HCT116 (cell line): ENCODE measurements at regions of chr4 and their contacts with region 1.

Region 1: GRCh38 chr4:106809076-106809475 is 227.0 kb downstream of the DKK2 start:
- DNase-seq: peak; percentile 26
- ATAC-seq: peak; percentile 81
- H3K4me3 ChIP-seq: no peak overlapping the region
- H3K27ac ChIP-seq: no peak overlapping the region
- H3K4me1 ChIP-seq: no peaks in the 10 kb centered on the region
- H3K27me3 ChIP-seq: no peaks in the 10 kb centered on the region
- CTCF ChIP-seq: peak; percentile 18 to 41 (median 36); a peak in 3 of 6 replicates
- POLR2A ChIP-seq: no peak
- RAD21 ChIP-seq: peak; percentile 75

Region 2: DNA sequence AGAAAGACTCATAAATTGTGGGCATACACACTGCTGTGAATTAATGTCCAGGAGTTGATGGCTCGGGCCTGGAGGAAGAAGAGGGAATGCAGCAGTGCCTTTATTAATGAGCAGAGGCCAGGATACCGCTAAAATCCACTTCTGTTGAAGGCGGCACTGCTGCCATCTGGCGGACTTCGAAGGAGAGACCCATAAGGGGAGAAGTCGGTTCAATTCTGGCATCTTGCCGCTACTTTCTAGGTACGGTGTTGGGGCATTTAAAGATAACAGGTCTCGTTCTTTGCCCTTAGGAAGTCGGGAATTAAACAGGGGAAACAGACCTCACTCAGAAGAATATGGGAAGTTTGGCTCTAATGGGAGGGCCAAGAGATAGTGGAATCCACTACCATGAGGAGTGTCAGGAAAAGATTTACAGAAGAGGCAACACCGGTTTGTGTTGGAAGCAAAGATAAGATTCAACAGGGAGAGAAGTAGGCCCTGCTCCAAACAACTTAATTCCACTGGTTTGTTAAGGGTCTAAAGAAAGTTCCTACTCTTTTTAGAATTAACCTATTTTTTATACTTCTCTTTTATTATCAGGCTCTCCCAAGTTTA is 306.9 kb before region 1 on chr4:
- CTCF ChIA-PET with region 1: no interaction called
- POLR2A ChIA-PET with region 1: no interaction called
- RAD21 ChIA-PET with region 1: no interaction called
- intact Hi-C with region 1: loop called (anchors 5 kb)
- DNase-seq: peak; percentile 54
- ATAC-seq: peak; percentile 97
- H3K4me3 ChIP-seq: peak overlapping the region in 1 of 2 experiments; percentile 17; a peak in 1 of 4 replicates
- H3K27ac ChIP-seq: no peak overlapping the region
- H3K4me1 ChIP-seq: peaks cover 0 to 2% of the 10 kb centered on the region in 2 experiments; a peak in 1 of 4 replicates
- H3K27me3 ChIP-seq: no peaks in the 10 kb centered on the region
- CTCF ChIP-seq: peak; percentile 74 to 83 (median 81)
- POLR2A ChIP-seq: no peak
- RAD21 ChIP-seq: peak; percentile 83

Region 3: GRCh38 chr4:106793933-106794332 is 15.1 kb before region 1 on chr4:
- CTCF ChIA-PET with region 1: interaction called, 3 read pairs
- POLR2A ChIA-PET with region 1: no interaction called
- RAD21 ChIA-PET with region 1: no interaction called
- intact Hi-C with region 1: loop called (anchors 1 kb)
- DNase-seq: no peak
- ATAC-seq: no peak
- H3K4me3 ChIP-seq: no peak overlapping the region
- H3K27ac ChIP-seq: no peak overlapping the region
- H3K4me1 ChIP-seq: no peaks in the 10 kb centered on the region
- H3K27me3 ChIP-seq: no peaks in the 10 kb centered on the region
- CTCF ChIP-seq: no peak
- POLR2A ChIP-seq: no peak
- RAD21 ChIP-seq: no peak